GM23248 (cell line): ENCODE measurements at regions of chr12 and their contacts with region 1.

Region 1: GRCh38 chr12:101830367-101831325 is at the start of gene GNPTAB:
- DNase-seq: peak; percentile 96
- H3K4me3 ChIP-seq: peak within 1 kb of the TSS; percentile 82
- H3K27ac ChIP-seq: no peak within 1 kb of the TSS
- H3K4me1 ChIP-seq: peaks cover 4% of the 10 kb centered on the region; the same call in 1 of the 2 replicates
- H3K27me3 ChIP-seq: no peaks in the 10 kb centered on the region
- total RNA-seq, gene GNPTAB: 23.3 and 26.6 TPM in 2 replicates

Region 2: DNA sequence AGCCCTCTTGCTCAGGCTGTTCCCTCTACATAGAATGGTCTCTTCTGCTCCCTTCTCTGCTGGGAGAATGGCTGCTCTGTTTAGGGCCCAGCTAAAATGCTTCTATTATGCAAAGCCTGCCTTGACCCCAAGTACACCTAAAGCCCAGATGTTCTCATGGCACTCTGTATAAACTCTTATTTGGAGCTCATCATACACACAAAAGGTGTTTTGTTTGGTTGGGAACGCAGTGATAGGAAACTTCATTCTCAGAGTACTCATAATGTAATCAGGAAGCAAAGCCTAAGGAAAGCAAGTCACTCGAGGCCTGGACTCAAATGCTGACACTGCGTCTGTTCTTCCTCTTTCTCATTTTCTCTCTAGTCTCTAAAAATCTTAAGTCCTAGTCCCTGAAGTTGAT is 53.2 kb before region 1 on chr12:
- in situ Hi-C with region 1: loop called (anchors 5 kb)
- DNase-seq: no peak
- H3K4me3 ChIP-seq: no peak overlapping the region
- H3K27ac ChIP-seq: no peak overlapping the region
- H3K4me1 ChIP-seq: peaks cover 8% of the 10 kb centered on the region
- H3K27me3 ChIP-seq: no peaks in the 10 kb centered on the region

Region 3: GRCh38 chr12:102197789-102198188 is 367.1 kb after region 1 on chr12 and contains the start of gene PMCH:
- in situ Hi-C with region 1: no loop called
- DNase-seq: peak; percentile 43
- H3K4me3 ChIP-seq: no peak within 1 kb of the TSS
- H3K27ac ChIP-seq: no peak within 1 kb of the TSS
- H3K4me1 ChIP-seq: 0 out of 2 replicates have a peak, but pooled peaks cover 6% of the 10 kb centered on the region
- H3K27me3 ChIP-seq: no peaks in the 10 kb centered on the region
- total RNA-seq, gene PMCH: not detected in 2 replicates